ENCODE measurements at regions of chr3 and their contacts with region 1.

Region 1: DNA sequence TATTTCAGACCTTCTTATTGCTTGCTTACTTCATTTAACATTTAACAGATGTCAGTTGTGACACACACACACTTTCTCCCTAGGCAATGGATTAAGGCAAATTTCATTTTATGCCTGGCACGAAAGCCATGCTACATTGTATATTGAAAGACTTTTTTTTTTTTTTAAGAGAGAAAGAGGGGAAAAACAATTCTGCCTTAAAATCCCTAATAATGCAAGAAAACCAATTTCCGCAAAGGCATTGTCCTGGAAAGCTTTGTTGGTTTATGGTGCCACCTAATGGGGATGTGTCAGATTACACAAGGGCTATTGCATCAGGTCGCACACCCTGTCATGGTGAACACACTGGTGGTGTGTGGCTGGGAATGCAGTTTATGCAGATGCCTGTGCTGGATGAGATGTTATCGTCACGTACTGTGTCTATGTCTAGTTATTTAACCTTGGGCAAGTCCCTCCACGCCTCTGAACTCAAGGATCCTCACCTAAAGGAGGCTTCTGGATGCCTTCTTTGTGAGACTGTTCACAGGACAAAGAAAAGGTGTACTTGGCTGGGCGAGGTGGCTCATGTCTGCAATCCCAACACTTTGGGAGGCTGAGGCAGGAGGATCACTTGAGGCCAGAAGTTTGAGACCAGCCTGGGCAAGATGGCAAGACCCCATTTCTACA is 37.3 kb upstream of the RFTN1 start:
- DNase-seq: peak; percentile 36 to 82 (median 76)
- ATAC-seq: peak; percentile 98
- H3K4me3 ChIP-seq: no peak overlapping the region
- H3K4me3 Mint-ChIP-seq: peak overlapping the region in 1 of 10 donors; percentile 10
- H3K27ac ChIP-seq: no peak overlapping the region
- H3K27ac Mint-ChIP-seq: peak overlapping the region in 5 of 9 donors; percentile 16 to 67 (median 36)
- H3K4me1 ChIP-seq: peaks cover 0 to 4% of the 10 kb centered on the region in 2 donors
- H3K4me1 Mint-ChIP-seq: peaks cover 6 to 15% (median 7%) of the 10 kb centered on the region in 7 donors
- H3K27me3 ChIP-seq: no peaks in the 10 kb centered on the region
- H3K27me3 Mint-ChIP-seq: peaks cover 0 to 11% (median 9%) of the 10 kb centered on the region in 5 donors

Region 2: DNA sequence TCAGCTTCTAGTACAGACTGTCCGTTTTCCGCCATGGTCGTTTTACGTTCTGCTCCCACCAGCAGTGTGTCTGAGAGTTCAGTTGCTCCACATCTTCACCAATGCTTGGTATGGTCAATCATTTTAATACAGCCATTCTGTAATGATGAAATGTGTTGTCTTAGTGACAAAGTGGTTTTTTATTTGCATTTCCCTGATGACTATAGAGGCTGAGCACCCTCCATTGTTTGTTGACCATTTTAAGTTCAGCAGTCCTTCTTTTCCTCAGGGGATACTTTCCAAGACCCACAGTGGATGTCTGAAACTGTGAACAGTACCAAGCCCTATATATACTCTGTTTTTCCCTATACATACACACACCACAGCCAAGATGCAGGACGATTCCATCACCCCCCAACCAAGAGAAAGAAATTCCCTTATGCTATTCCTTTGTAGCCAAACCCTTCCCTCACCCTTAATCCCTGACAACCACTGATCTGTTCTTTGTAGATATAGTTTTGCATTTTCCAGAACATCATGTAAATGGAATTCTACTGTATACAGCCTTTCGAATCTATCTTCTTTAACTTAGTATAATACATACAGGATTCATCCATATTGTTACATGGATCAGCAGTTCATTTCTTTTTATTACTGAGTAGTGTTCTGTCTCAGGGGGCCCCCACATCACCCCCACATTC is 1820.0 kb before region 1 on chr3:
- CTCF ChIA-PET with region 1: no interaction called
- POLR2A ChIA-PET with region 1: no interaction called
- intact Hi-C with region 1: no loop called
- DNase-seq: no peak
- ATAC-seq: no peak
- H3K4me3 ChIP-seq: no peak overlapping the region
- H3K4me3 Mint-ChIP-seq: no peak overlapping the region
- H3K27ac ChIP-seq: no peak overlapping the region
- H3K27ac Mint-ChIP-seq: no peak overlapping the region
- H3K4me1 ChIP-seq: no peaks in the 10 kb centered on the region
- H3K4me1 Mint-ChIP-seq: no peaks in the 10 kb centered on the region
- H3K27me3 ChIP-seq: no peaks in the 10 kb centered on the region
- H3K27me3 Mint-ChIP-seq: peaks cover 0 to 5% (median 0%) of the 10 kb centered on the region in 5 donors

Region 3: GRCh38 chr3:15479400-15480223 is 1071.2 kb before region 1 on chr3:
- CTCF ChIA-PET with region 1: no interaction called
- POLR2A ChIA-PET with region 1: no interaction called
- intact Hi-C with region 1: no loop called
- DNase-seq: no peak
- ATAC-seq: no peak
- H3K4me3 ChIP-seq: no peak overlapping the region
- H3K4me3 Mint-ChIP-seq: no peak overlapping the region
- H3K27ac ChIP-seq: no peak overlapping the region
- H3K27ac Mint-ChIP-seq: no peak overlapping the region
- H3K4me1 ChIP-seq: no peaks in the 10 kb centered on the region
- H3K4me1 Mint-ChIP-seq: peaks cover 0 to 4% (median 0%) of the 10 kb centered on the region in 7 donors
- H3K27me3 ChIP-seq: no peaks in the 10 kb centered on the region
- H3K27me3 Mint-ChIP-seq: peaks cover 0 to 37% (median 0%) of the 10 kb centered on the region in 5 donors

Region 4: GRCh38 chr3:15923640-15924405 is 627.0 kb before region 1 on chr3:
- CTCF ChIA-PET with region 1: no interaction called
- POLR2A ChIA-PET with region 1: no interaction called
- intact Hi-C with region 1: no loop called
- DNase-seq: peak in 1 of 9 donors; percentile 7
- ATAC-seq: no peak
- H3K4me3 ChIP-seq: no peak overlapping the region
- H3K4me3 Mint-ChIP-seq: no peak overlapping the region
- H3K27ac ChIP-seq: no peak overlapping the region
- H3K27ac Mint-ChIP-seq: no peak overlapping the region
- H3K4me1 ChIP-seq: no peaks in the 10 kb centered on the region
- H3K4me1 Mint-ChIP-seq: peaks cover 0 to 2% (median 0%) of the 10 kb centered on the region in 7 donors
- H3K27me3 ChIP-seq: no peaks in the 10 kb centered on the region
- H3K27me3 Mint-ChIP-seq: peaks cover 0 to 18% (median 6%) of the 10 kb centered on the region in 5 donors

Region 5: GRCh38 chr3:16048435-16049318 is 502.1 kb before region 1 on chr3:
- CTCF ChIA-PET with region 1: interaction called, 3 read pairs
- POLR2A ChIA-PET with region 1: no interaction called
- intact Hi-C with region 1: loop called (anchors 1 kb)
- DNase-seq: peak in 7 of 9 donors; percentile 11 to 53 (median 43)
- ATAC-seq: peak; percentile 92
- H3K4me3 ChIP-seq: no peak overlapping the region
- H3K4me3 Mint-ChIP-seq: peak overlapping the region in 5 of 10 donors; percentile 4 to 72 (median 48)
- H3K27ac ChIP-seq: no peak overlapping the region
- H3K27ac Mint-ChIP-seq: no peak overlapping the region
- H3K4me1 ChIP-seq: no peaks in the 10 kb centered on the region
- H3K4me1 Mint-ChIP-seq: peaks cover 0 to 5% (median 4%) of the 10 kb centered on the region in 7 donors
- H3K27me3 ChIP-seq: no peaks in the 10 kb centered on the region
- H3K27me3 Mint-ChIP-seq: peaks cover 0 to 5% (median 0%) of the 10 kb centered on the region in 5 donors

Region 6: GRCh38 chr3:16177962-16178627 is 372.7 kb before region 1 on chr3:
- CTCF ChIA-PET with region 1: no interaction called
- POLR2A ChIA-PET with region 1: no interaction called
- intact Hi-C with region 1: loop called (anchors 1 to 2 kb)
- DNase-seq: peak; percentile 10 to 72 (median 48)
- ATAC-seq: peak; percentile 75
- H3K4me3 ChIP-seq: no peak overlapping the region
- H3K4me3 Mint-ChIP-seq: peak overlapping the region in 2 of 10 donors; percentile 38 to 39
- H3K27ac ChIP-seq: no peak overlapping the region
- H3K27ac Mint-ChIP-seq: peak overlapping the region in 1 of 9 donors; percentile 40
- H3K4me1 ChIP-seq: no peaks in the 10 kb centered on the region
- H3K4me1 Mint-ChIP-seq: peaks cover 0 to 7% (median 5%) of the 10 kb centered on the region in 7 donors
- H3K27me3 ChIP-seq: no peaks in the 10 kb centered on the region
- H3K27me3 Mint-ChIP-seq: peaks cover 9 to 23% (median 19%) of the 10 kb centered on the region in 5 donors

Region 7: DNA sequence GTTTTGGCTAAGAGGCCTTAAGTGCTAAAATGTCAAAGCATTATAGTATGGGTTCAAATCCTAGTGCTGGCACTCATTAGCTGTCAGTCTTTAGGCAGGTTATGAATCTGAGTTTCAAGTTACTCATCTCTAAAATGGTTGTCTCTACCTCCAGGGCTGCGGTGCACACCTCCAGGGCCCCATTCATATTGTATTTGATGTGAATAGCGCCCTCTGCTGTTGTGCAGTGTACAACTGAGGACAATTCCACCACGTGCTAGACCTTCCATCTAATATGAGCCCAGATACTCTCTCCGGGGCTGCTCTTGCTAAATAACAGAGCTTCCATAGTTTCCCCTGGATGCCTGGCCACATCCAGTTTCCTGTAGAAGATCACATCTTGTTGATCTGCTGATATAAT is 231.5 kb before region 1 on chr3:
- CTCF ChIA-PET with region 1: interaction called, 8 read pairs
- POLR2A ChIA-PET with region 1: no interaction called
- intact Hi-C with region 1: loop called (anchors 1 kb)
- DNase-seq: peak in 8 of 9 donors; percentile 66 to 81 (median 78)
- ATAC-seq: peak; percentile 93
- H3K4me3 ChIP-seq: no peak overlapping the region
- H3K4me3 Mint-ChIP-seq: peak overlapping the region; percentile 35 to 78 (median 60)
- H3K27ac ChIP-seq: peak overlapping the region; percentile 60
- H3K27ac Mint-ChIP-seq: peak overlapping the region; percentile 79 to 98 (median 91)
- H3K4me1 ChIP-seq: peaks cover 40 to 58% of the 10 kb centered on the region in 2 donors
- H3K4me1 Mint-ChIP-seq: peaks cover 44 to 89% (median 81%) of the 10 kb centered on the region in 7 donors
- H3K27me3 ChIP-seq: no peaks in the 10 kb centered on the region
- H3K27me3 Mint-ChIP-seq: no peaks in the 10 kb centered on the region

Region 8: GRCh38 chr3:16378920-16379319 is 171.9 kb before region 1 on chr3:
- CTCF ChIA-PET with region 1: interaction called, 3 read pairs
- POLR2A ChIA-PET with region 1: no interaction called
- intact Hi-C with region 1: loop called in 1 of 2 experiments (anchors 2 kb)
- DNase-seq: no peak
- ATAC-seq: peak; percentile 19
- H3K4me3 ChIP-seq: no peak overlapping the region
- H3K4me3 Mint-ChIP-seq: peak overlapping the region in 8 of 10 donors; percentile 26 to 85 (median 42)
- H3K27ac ChIP-seq: no peak overlapping the region
- H3K27ac Mint-ChIP-seq: peak overlapping the region in 8 of 9 donors; percentile 54 to 94 (median 90)
- H3K4me1 ChIP-seq: peaks cover 28 to 60% of the 10 kb centered on the region in 2 donors
- H3K4me1 Mint-ChIP-seq: peaks cover 52 to 98% (median 87%) of the 10 kb centered on the region in 7 donors
- H3K27me3 ChIP-seq: no peaks in the 10 kb centered on the region
- H3K27me3 Mint-ChIP-seq: no peaks in the 10 kb centered on the region

Region 9: DNA sequence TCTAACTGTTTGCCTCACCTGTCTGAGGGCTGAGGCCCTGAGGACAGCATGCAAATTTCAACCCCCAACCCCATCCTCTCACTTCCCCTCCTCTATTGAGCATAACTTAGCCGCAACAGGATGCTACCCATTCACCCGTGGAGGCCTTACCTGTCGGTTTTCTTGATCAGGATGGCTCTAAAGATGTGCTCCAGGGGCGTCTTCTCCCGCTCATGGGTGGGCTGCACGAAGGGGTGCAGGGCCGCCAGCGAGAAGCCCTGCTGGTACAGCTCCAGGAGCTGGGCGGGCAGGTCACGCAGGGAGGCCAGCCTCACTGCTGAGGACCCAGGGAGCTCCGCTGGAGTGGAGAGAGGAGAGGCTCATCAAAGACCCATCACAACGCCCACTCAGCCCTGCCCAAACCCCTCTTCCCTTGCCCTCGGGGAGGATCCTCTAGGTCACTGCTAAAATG is 117.1 kb before region 1 on chr3:
- CTCF ChIA-PET with region 1: no interaction called
- POLR2A ChIA-PET with region 1: no interaction called
- intact Hi-C with region 1: no loop called
- DNase-seq: no peak
- ATAC-seq: no peak
- H3K4me3 ChIP-seq: no peak overlapping the region
- H3K4me3 Mint-ChIP-seq: no peak overlapping the region
- H3K27ac ChIP-seq: no peak overlapping the region
- H3K27ac Mint-ChIP-seq: peak overlapping the region in 1 of 9 donors; percentile 80
- H3K4me1 ChIP-seq: no peaks in the 10 kb centered on the region
- H3K4me1 Mint-ChIP-seq: peaks cover 8 to 24% (median 11%) of the 10 kb centered on the region in 7 donors
- H3K27me3 ChIP-seq: no peaks in the 10 kb centered on the region
- H3K27me3 Mint-ChIP-seq: no peaks in the 10 kb centered on the region

Measured in naive thymus-derived CD4-positive, alpha-beta T cell (primary cell).